Left colon (tissue), 2 donors: ENCODE measurements at regions of chr12 and their contacts with region 1.

Region 1: GRCh38 chr12:49567611-49568441 is at the start of gene MCRS1:
- DNase-seq: peak; percentile 93 to 95
- ATAC-seq: peak; percentile 96
- total RNA-seq, gene MCRS1: 62.3 to 66.1 TPM

Region 2: GRCh38 chr12:49693994-49694393 is 126.2 kb after region 1 on chr12:
- intact Hi-C with region 1: loop called in 1 of 2 experiments (anchors 5 kb)
- DNase-seq: no peak
- ATAC-seq: no peak